Posterior cingulate gyrus (tissue), 11 donors: ENCODE measurements at regions of chr15 and their contacts with region 1.

Region 1: DNA sequence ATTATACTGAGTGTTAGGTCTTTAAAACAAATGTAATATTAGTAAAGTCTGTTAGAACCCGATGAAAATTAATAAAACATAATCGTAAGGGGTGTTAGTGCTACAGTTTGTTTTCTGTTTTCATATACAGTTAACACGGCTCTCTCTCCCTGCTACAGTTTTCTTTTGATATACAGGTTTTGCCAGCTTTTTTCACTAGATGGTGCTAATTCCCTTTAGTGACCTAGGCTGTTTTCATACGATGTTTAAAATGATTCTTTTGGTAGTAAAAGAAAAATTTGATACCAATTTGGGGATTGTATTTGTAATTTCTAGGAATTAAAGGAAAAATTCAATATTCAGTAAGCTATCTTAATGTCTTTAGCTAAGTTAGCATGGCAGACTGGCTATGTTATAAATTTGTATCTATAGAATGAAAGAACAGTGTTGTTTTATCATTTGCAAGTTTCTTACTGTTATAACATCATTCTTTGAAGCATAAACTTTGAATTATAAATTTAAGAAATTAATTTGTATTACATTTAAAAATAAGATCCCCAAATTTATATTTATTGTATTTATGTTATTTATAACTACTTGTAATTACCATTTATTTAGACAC is 11.5 kb downstream of the APH1B start:
- DNase-seq: no peak

Region 2: DNA sequence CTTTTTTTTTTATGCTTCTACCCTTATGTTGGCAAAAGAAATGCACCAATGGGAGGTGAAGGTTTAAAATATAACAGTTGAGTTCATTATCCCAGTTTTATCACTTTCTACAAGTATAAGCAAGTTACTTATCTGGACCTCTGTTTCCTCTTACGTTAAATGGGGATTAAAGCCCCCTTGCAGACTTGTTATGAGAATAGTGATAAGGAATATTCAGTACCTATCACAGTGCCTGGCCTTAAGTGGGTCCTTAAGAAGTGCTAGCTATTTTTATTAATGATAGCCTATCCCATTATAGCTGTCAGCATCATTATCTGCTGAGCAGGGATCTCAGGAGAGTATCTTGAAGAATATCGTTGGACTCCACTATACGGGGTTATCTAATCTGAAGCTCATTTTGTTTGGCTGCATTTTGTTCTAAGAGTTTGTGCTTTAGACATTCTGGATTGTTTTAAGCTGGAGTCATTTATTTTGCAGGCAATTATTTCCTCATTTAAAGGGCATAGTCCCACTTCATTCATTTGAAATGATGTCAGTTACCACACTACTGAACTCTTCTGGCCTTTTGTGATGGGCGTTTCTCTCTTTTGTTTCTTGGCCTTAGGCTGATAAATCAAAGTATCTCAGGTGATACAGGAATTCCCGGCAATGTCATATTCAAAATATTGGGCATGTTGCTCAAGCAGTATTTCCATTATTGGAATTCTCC is 70.6 kb before region 1 on chr15:
- intact Hi-C with region 1: no loop called
- DNase-seq: no peak

Region 3: DNA sequence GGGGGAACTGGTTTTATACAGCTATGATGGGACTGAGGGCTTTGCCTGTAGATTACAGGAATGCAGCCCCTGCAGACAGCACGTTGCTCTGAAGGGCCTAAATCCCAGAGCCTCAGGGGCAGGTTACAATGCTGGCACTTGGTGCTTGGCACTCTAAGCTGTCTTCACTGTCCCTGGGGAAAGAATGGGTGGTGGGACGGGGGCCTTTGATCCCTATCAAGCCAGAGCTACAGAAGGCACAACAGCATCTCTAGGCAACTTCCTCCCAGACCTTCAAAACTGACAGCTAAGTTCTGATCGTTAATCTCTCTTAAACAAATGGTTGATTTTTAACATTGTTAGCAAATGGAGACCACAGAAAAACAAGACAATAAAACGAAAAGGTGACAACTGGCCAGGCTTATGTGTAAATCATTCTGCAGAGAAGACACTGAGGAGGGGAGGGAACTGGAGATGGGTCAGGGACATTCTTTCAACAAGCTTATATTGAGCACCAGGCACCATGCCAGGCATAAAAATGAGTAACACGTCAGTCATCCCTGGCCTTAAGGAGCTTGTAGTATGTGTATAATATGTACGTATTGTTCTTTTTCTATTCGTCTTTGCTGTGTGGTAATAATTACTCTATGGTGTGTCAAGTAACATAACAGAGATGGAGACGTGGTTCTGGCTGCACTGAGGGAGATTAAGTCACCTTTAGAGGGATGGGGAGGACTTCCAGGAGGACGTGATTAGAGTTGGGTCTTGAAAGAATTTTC is 43.7 kb after region 1 on chr15:
- intact Hi-C with region 1: no loop called
- DNase-seq: no peak

Region 4: DNA sequence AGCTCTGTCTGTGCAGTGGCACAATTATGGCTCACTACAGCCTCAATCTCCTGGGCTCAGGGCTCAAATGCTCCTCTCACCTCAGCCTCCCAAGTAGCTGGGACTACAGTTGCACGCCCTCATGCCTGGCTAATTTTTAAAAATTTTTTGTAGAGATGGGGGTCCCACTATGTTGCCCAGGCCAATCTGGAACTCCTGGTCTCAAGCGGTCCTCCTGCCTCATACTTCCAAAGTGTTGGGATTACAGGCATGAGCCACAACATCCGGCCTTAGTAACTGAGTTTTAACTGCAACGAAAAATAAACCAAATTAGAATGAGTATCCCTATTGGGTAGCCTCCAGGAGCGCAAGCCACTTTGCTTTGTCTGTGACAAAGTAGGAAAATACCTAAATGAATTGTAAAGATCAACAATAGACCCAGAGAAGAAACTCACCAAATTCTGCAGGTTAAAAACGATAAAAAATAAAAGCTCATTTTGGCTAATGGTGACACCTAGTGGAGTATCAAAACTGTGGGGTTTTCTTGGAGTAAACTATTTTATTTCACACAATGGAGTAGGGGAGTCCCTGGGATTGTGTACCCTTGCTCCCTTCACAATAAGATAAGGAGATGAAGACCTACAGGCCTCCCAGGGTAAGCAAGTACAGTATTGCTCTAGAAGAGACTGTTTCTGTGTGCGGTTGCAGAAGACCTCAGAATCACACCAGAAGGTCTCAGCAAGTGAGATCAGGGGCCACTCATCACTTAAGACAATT is 113.8 kb after region 1 on chr15:
- intact Hi-C with region 1: loop called (anchors 1 kb)
- DNase-seq: no peak

Region 5: GRCh38 chr15:63461230-63461985 is 172.5 kb after region 1 on chr15:
- intact Hi-C with region 1: loop called (anchors 5 kb)
- DNase-seq: peak in 9 of 10 donors; percentile 40 to 91 (median 63)

Region 6: GRCh38 chr15:63752075-63752684 is 463.3 kb after region 1 on chr15:
- intact Hi-C with region 1: no loop called
- DNase-seq: peak in 1 of 10 donors; percentile 21